ENCODE measurements at regions of chr16 and their contacts with region 1.

Region 1: GRCh38 chr16:55944377-55944802 is 69.2 kb upstream of the CES5A start:
- DNase-seq: peak; percentile 40 to 60
- ATAC-seq: peak; percentile 78 to 80
- H3K4me3 ChIP-seq: no peak overlapping the region
- H3K27ac ChIP-seq: no peak overlapping the region
- H3K4me1 ChIP-seq: peaks cover 0 to 3% of the 10 kb centered on the region in 2 donors
- H3K27me3 ChIP-seq: peaks cover 0 to 2% (median 0%) of the 10 kb centered on the region in 3 donors
- CTCF ChIP-seq: peak; percentile 66 to 89 (median 76)
- POLR2A ChIP-seq: no peak

Region 2: DNA sequence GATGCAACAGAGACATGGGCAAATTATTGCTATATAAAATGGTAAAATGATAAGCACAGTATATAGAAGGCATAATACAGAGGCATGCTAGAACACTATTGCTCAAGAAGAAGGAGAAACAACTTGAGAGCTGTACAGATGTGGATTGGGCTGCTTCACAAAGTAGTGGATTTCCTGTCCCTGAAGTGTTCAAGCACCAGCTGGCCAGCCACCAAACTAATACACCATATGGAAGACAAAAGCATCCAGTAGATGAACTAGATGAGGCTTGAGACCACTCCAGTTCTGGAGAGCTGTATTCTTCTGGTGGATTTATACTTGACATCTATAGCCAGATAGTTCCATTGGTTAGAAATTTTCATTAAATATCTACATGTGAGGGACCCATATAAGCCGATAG is 112.8 kb after region 1 on chr16:
- in situ Hi-C with region 1: no loop called
- intact Hi-C with region 1: no loop called
- DNase-seq: no peak
- ATAC-seq: no peak
- H3K4me3 ChIP-seq: no peak overlapping the region
- H3K27ac ChIP-seq: no peak overlapping the region
- H3K4me1 ChIP-seq: no peaks in the 10 kb centered on the region
- H3K27me3 ChIP-seq: peaks cover 0 to 2% (median 0%) of the 10 kb centered on the region in 3 donors
- CTCF ChIP-seq: no peak
- POLR2A ChIP-seq: no peak

Region 3: DNA sequence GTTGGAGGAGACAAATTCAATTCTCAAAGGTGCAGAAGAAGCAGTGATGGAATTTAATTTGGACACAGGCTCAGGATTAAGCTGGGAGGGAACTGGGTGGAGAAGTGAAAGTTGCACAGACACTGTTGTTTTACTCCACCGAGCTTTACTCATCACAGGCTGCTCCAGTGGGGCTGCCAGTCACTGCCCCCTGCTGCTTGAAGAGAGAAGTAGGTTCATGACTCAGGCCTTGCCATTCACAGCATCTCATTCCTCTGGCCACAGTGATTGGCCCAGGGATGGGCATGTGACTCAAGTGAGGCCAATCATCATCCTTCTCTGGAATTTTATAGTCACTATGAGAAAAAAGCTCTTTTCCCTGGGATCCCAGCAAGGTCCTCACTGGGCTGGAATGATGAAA is 258.7 kb after region 1 on chr16:
- in situ Hi-C with region 1: loop called in 1 of 4 experiments (anchors 10 kb)
- intact Hi-C with region 1: no loop called
- DNase-seq: no peak
- ATAC-seq: no peak
- H3K4me3 ChIP-seq: no peak overlapping the region
- H3K27ac ChIP-seq: no peak overlapping the region
- H3K4me1 ChIP-seq: no peaks in the 10 kb centered on the region
- H3K27me3 ChIP-seq: no peaks in the 10 kb centered on the region
- CTCF ChIP-seq: no peak
- POLR2A ChIP-seq: no peak

Region 4: DNA sequence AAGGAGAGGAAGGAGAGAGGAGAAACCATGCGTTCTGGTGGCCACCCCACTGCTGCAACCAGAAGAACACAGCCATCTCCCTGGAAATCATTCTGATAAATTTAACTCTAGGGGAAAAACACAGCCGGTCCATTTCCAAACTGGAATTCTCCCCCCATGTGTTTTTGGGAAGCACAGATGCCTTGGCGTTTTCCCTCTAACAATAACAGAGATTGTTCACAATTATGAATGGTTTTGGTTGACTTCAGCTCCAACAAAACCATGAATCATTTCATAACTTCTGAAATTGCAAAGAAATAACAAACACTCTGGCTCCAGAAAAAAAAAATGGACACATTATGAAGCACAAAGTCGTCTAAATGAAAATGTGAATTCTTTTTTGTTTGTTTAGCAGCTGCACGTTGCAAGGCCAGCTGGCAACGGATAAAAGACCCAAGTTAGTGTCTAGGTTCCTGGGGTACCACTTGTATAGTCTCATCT is 293.1 kb after region 1 on chr16:
- in situ Hi-C with region 1: no loop called
- intact Hi-C with region 1: no loop called
- DNase-seq: no peak
- ATAC-seq: peak in 1 of 2 donors; percentile 36
- H3K4me3 ChIP-seq: no peak overlapping the region
- H3K27ac ChIP-seq: no peak overlapping the region
- H3K4me1 ChIP-seq: no peaks in the 10 kb centered on the region
- H3K27me3 ChIP-seq: no peaks in the 10 kb centered on the region
- CTCF ChIP-seq: no peak
- POLR2A ChIP-seq: no peak

Region 5: GRCh38 chr16:56311208-56312027 is 367.0 kb after region 1 on chr16:
- in situ Hi-C with region 1: loop called (anchors 5 kb)
- intact Hi-C with region 1: no loop called
- DNase-seq: no peak
- ATAC-seq: no peak
- H3K4me3 ChIP-seq: no peak overlapping the region
- H3K27ac ChIP-seq: no peak overlapping the region
- H3K4me1 ChIP-seq: no peaks in the 10 kb centered on the region
- H3K27me3 ChIP-seq: no peaks in the 10 kb centered on the region
- CTCF ChIP-seq: no peak
- POLR2A ChIP-seq: no peak

Measured in gastrocnemius medialis (tissue), 4 donors.